ENCODE measurements at regions of chr6 and their contacts with region 1.

Region 1: GRCh38 chr6:164106345-164106769 is 691.8 kb downstream of the QKI start:
- DNase-seq: peak; percentile 80
- ATAC-seq: peak; percentile 41

Region 2: DNA sequence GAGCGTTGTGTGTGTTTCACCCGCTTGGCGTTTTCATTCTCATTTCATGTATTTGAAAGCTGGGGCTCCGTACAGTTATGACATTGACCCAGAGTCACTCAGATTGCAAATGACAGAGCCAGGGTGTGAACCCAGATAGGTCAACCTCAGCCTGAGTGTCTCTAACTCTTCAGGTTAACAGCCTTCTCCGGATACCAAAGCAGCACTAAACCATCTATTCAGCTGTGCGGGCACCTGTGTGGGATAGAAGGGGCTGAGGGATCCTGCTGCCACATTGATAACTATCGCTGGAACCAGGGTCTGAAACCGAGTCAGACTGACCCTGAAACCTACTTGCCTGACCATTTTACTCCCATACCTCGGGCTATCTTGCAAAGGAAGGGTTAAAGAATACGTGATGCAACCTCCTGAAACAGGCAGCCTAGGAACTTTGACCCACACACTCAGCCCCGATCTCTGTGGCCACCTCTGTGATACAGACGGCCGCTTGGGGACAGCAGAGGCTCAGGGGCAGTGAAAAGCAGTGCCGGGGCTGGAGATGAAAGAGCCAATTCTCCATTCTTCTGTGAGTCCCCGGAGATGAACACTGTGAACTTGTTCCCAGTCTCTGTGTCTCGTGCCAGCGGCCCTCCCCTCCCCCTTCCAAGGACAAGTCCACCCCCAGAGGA is 925.3 kb before region 1 on chr6:
- intact Hi-C with region 1: loop called (anchors 5 kb)
- DNase-seq: peak; percentile 86
- ATAC-seq: peak; percentile 95

Region 3: DNA sequence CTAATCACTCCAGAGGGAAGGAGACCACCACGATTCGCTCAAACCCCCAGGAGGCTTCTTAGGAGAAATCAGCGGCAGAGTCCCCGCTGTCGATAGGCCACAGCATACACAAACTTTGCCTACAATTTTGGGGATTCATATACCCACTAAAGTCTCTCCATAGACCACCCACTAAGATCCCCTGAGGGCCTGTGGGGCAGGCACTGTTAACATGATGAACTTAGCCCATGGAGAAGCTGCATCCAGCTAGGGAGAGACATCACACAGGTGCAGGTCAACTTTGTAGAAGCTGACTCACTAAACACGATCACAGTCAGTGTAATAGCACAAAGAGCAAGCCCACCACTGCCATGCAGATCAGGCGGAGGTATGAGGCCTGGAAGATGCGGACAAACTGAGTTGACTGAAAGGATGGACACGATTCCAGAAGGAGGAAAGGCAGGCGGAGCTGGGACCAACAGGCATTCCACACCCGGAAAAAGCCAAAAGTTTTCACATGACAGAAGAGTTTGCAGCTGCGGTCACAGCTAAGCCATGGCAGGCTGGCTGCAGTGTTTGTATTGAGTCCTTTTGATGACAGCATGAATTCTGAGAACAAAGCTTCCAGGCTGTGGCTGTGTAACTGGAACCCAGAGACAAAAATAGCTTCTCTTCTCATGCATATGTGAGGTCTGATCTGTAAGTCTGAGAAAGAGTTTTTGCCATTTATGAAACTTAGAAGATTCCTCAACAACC is 767.5 kb before region 1 on chr6:
- intact Hi-C with region 1: loop called (anchors 5 kb)
- DNase-seq: no peak
- ATAC-seq: peak; percentile 58

Region 4: DNA sequence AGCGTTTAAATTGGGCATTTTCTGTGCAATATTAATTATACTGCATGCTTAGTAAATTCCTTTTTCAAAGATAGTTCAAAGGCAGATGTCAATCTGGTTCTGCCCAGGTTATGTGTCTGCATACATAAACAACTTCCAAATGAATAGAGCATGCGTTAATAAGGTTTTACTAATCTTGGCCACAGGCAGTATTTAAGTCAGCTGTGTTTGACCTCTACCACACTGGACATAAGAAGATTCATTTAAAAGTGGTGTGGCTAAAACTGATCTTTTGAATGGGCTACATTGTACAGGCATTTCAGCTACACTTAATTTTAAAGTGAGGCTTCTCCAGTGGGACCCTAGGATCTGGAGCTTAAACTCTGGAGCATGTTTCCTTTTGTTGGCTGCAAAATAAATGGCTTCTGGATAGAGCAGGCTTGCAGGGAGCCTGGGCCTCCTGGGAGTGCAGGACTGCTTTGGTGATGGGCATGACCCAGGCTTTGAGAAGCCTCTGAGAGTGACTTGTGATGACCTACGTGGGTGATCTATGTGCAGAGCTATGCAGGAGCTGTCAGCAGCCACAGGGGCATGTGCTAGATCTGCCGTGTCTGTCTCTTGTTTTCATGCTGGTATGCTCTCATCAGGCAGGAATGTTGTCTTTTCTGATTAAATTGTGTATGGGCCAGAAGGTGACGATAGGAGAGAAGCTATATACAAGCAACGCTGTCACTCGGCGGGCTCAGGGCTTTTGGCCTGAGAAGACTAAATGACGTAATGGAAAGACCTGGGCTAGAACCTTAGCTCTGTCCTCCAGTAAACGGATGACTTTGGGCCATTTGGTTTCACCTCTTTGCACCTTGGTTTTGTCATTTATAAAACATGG is 360.6 kb before region 1 on chr6:
- intact Hi-C with region 1: loop called (anchors 2 kb)
- DNase-seq: no peak
- ATAC-seq: peak; percentile 94

Region 5: GRCh38 chr6:163965426-163966348 is 140.7 kb before region 1 on chr6:
- intact Hi-C with region 1: loop called (anchors 1 kb)
- DNase-seq: no peak
- ATAC-seq: peak; percentile 58

Region 6: DNA sequence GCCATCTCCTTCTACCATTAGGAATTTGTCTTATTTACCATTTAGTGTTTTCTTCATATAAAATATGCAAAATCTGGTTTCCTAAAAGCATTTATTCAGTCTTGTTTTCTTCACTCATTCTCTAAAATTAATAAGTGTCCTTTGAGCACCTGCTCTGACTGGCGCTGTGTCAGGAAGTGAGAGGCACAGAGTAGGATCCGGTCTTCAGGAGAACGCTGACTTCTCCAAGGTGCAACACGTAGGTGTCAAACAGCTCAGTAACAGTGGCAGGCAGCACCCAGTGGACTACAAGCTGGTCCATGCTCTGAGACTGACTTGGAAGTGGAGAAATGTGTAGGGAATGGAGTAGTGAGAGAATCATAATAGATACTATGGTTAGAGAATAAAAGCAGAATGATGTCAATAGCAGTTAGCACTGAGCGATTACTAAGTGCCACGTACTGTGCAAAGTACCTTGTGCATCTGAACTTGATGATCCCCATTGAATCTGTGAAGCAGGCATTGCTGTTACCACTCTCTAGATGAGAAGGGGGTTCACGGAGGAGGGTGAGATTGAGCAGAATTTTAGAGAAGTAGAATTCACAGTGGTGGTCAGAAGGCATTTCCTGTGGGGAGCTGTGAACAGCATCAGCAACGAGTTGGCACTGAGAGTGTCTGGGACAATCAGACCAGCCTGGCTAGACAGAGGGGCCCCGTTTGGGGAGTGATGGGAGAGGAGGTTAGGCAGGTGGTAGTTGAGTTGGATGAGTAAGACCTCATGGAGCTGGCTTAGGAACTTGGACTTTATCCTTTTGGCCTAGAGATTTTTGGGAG is 122.0 kb before region 1 on chr6:
- intact Hi-C with region 1: no loop called
- DNase-seq: no peak
- ATAC-seq: no peak

Region 7: DNA sequence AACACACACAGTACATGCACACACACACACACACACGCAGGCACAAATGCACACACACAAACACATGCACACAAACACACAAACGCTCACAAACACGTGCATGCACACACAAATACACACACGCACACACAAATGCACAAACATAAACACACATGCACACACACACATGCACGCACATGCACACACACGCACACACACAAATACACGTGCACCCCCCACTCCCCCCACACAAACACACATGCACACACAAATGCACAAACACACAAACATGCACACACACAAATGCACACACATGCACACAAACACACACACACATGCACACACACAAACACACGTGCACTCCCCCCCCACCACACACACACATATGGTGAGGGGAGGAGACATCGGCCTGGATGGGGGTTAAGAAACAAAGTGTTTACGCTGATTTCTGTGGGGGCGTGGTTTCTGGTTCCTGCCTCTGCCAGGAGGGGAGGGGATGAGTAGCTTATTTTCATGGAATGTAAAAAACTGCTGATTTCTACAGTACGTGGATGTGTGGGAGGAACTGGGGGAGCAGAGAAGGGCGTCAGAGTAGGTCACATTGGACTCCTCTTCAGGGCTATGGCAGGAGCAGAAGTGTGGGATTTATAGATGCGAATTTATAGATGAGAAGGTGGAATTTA is 84.6 kb before region 1 on chr6:
- intact Hi-C with region 1: no loop called
- DNase-seq: no peak
- ATAC-seq: no peak

Region 8: DNA sequence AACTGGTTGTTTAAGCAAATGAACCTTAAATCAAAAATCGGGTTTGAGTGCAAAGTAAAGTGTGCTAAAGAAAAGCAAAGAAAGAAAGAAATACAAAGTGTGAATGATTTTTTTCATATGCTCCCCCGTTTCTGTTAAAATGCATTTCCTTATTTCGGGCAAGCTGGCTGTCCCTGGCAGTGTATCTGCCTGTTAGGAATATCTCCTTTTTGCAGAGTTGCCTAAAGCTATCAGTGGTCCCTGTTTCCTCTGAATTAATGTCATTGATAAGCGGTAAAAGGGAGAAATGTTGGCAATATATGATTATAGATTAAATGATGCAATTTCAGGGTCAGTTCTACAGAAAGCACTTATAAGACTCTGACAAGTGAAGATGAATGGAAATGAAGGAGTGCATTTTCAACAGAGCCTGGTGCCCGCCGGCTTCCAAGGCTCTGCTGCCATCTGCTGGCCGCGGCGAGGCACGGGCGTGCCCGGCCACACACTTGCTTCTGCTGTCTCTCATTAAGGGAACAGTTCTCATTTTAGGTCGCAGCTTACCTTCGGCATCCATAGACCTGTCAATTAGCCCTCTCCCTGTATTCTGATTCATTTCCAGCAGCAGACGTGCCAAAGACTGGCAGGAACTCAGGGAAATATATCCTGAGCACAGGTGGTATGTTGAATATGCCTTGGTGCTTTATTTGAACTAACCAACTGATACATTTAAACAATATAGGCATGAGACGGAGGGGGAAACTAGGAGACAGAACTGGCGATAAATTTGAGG is 821.1 kb after region 1 on chr6:
- intact Hi-C with region 1: loop called (anchors 5 kb)
- DNase-seq: peak; percentile 70
- ATAC-seq: peak; percentile 92